Head of caudate nucleus (tissue), 42 donors: ENCODE measurements at regions of chr7 and their contacts with region 1.

Region 1: DNA sequence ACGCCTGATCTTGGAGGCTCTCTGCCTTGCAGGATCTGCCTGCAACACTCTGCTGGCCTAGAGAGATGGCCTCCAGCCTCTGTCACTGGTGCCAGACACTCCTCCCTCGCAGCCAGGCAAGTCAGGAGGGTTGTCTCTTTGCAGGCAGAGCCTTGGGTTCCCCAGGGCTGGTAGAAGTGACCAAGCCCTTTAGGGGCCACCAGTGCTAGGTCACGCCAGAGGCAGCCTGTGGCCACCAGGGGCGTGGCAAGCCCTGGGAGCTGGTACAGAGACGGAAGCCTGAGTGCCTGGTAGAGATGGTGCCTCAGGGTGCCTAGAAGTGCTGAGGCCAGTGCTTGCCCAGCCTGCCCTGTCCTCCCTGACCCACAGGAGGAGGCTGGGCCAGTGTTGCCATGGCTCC is 9.1 kb downstream of the ADCYAP1R1 start:
- DNase-seq: no peak

Region 2: DNA sequence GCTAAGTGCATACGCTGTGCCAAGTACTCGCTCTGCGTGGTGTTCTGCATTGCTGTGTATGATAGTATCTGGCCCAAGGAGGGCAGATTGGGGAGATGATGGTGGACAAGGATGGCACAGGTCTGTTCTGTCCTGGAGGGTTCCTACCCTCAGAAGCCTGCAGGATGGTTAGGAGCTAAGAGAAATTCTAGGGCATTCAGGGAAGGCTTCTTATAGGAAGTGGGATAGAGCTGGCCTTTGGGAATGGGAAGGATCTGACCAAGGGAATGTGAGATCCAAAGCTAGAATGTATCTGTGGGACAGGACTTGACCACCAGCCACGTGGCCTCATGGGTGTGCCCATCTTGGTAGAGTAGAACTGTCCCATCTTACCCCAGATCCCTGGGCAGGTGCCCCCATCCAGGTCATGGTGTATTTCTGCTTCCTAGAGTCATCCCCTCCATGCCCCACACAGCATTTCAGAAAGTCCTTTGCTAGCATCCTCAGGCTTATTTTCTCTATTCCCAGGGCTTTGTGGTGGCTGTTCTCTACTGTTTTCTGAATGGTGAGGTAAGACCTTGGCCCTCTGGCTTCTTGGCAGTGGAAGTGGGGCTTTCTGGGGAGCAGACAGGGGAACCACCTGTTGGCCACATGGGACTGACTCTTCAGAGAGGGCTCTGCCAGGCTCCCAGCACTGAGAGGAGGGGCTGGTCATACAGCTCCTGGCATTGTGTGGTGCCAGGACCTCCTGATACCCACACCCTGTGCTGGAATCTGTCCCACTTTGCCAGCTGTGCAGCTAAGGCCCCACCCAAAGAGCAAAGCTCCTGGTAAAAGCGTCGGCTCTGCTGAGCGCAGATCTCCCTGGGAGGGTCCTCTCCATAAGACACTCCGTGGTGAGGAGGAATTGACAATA is 43.4 kb after region 1 on chr7:
- intact Hi-C with region 1: loop called (anchors 5 kb)
- DNase-seq: peak in 3 of 42 donors; percentile 12 to 15 (median 15)